ENCODE measurements at regions of chr5 and their contacts with region 1.

Region 1: DNA sequence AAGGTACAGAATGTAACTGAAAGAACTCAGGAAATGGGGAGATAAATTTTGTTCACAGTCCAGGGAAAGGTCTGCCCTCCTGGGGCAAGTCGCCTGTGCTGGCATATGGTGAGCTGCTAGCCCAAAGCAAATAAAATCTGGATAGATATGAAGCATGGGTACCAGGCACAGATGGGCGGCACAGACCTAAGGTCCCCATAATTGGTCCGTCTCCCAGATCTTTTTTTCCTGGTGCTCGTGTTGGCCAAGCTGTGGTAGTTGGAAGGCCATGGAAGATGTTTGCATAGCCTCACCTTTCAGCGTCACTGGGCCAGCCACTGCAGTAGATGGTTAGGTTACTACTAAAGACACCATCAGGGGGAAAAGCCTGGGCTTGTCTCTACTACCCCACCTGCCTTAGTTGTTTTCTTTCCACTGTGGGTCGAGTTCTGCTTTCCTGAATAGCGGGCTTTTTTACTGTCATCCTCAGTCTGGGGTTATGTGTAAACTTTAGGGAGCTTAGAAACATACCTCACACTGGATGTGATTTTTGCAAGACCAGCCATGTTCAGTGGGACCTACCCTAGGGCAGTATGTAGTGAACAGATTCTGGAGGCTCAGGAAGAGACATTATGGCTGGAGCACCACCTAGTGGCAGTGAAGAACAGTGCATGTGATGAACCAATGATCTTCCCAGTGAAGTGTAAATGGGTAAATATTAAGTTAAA is 24.2 kb upstream of the GLRX start:
- DNase-seq: peak in 4 of 6 donors; percentile 56 to 81 (median 60)
- ATAC-seq: peak; percentile 68 to 90 (median 86)
- H3K4me3 ChIP-seq: no peak overlapping the region
- H3K27ac ChIP-seq: no peak overlapping the region
- H3K4me1 ChIP-seq: peaks cover 4 to 7% (median 5%) of the 10 kb centered on the region in 3 donors
- H3K27me3 ChIP-seq: no peaks in the 10 kb centered on the region
- CTCF ChIP-seq: peak; percentile 80 to 94 (median 91)

Region 2: DNA sequence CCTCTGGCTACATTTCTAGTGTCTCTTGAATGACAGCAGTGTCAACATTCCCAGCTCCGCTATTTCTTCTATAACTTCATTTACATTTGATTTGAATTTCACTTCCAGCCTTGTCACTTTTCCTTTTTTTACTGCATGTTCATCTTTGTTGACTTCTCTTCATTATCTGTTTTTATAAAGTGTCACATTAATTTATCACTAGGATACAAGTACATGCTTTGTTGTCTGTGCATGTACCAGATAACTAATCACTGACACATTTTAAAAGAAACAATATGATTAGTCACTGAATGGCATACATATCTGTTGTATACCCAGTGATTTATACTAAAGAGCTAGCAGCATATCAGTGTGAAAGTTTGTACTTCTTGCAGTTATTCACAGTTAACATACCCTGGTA is 262.7 kb before region 1 on chr5:
- intact Hi-C with region 1: no loop called
- DNase-seq: no peak
- ATAC-seq: no peak
- H3K4me3 ChIP-seq: no peak overlapping the region
- H3K27ac ChIP-seq: no peak overlapping the region
- H3K4me1 ChIP-seq: no peaks in the 10 kb centered on the region
- H3K27me3 ChIP-seq: no peaks in the 10 kb centered on the region
- CTCF ChIP-seq: no peak

Region 3: GRCh38 chr5:95646554-95647431 is 199.9 kb before region 1 on chr5 and contains the start of gene RFESD:
- intact Hi-C with region 1: loop called in 2 of 3 experiments (anchors 5 to 10 kb)
- DNase-seq: peak; percentile 99 to 100 (median 99)
- ATAC-seq: peak; percentile 90 to 97 (median 91)
- H3K4me3 ChIP-seq: peak within 1 kb of the TSS in 3 of 4 donors; percentile 21 to 56 (median 28)
- H3K27ac ChIP-seq: peak within 1 kb of the TSS; percentile 92 to 95 (median 94)
- H3K4me1 ChIP-seq: peaks cover 20 to 46% (median 30%) of the 10 kb centered on the region in 3 donors
- H3K27me3 ChIP-seq: no peaks in the 10 kb centered on the region
- CTCF ChIP-seq: no peak
- total RNA-seq, gene RFESD: 1.3 to 2.7 (median 1.7) TPM

Region 4: DNA sequence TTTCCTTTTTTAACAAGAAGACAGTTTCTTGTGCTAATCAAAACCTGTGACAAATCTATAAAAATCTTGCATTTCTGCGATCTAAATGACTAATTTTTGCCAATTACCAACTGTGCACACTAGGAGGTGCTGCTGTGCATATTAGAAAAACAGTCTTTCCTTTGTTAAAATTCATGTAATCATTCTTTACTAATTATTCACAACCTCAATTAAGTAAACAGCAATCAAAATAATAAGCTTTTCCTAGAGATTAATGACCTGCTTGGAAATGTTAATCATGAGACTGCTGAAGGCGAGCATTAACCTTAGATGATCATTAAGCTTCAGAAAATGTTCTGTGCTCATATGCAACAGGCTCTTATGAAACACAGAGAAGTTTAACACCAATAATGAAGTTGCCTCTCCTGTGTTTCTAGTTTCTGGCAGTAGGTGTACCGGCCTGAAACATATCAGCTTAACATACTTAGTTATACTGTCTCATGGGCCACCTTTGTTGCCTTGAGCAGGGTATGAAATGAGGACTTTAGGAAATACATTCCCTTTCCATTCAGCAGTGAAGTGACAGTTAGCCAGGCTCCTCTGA is 182.4 kb before region 1 on chr5:
- intact Hi-C with region 1: loop called in 1 of 3 experiments (anchors 5 kb)
- DNase-seq: peak in 1 of 6 donors; percentile 38
- ATAC-seq: peak; percentile 50 to 80 (median 73)
- H3K4me3 ChIP-seq: no peak overlapping the region
- H3K27ac ChIP-seq: peak overlapping the region in 1 of 4 donors; percentile 12
- H3K4me1 ChIP-seq: peaks cover 0 to 10% (median 8%) of the 10 kb centered on the region in 3 donors
- H3K27me3 ChIP-seq: no peaks in the 10 kb centered on the region
- CTCF ChIP-seq: peak; percentile 37 to 66 (median 51)

Region 5: GRCh38 chr5:95781101-95781583 is 65.6 kb before region 1 on chr5:
- intact Hi-C with region 1: loop called in 1 of 3 experiments (anchors 5 kb)
- DNase-seq: peak; percentile 62 to 79 (median 68)
- ATAC-seq: peak; percentile 72 to 98 (median 94)
- H3K4me3 ChIP-seq: no peak overlapping the region
- H3K27ac ChIP-seq: peak overlapping the region in 2 of 4 donors; percentile 7 to 46
- H3K4me1 ChIP-seq: peaks cover 0 to 6% (median 6%) of the 10 kb centered on the region in 3 donors
- H3K27me3 ChIP-seq: no peaks in the 10 kb centered on the region
- CTCF ChIP-seq: peak; percentile 30 to 73 (median 62)